ENCODE measurements at regions of chr19 and their contacts with region 1.

Region 1: DNA sequence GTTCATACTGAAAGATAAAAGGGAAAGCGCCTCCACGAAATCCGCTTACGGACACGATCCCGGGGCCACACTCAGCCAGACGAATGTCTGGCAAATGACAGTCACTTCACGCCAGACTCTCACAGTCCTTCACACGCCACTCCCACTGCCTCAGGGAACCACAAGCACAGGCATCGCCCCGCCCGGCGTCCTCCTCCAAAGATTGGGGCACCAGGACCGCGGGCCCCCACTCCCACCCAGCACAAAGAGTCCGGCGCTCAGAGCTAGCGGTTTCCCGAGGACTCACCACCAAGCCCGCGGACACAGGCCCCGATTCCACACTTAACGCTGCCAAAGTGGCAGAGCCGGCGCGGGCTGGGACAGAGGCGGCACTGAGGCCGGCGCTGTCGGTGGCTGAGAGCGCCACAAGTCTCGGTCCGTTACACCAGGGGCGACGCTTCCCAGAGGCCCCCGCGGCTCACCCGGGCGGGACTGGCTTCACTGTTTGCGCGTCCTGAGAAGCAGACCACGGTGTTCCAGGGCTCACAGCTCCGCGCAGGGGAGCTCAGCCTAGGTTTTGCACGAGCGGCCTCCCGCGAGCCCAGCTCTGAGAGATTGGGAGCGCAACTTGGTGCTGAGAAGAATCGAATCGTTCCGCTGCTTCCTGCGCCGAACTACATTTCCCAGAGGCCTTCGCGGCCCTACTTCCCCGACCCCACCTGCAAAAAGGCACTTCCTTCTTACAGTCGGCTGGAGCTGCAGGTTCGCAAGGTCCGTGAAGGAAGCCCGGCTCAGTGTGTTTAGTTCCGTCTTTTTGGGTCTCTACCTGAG is at the start of gene ZNF569:
- DNase-seq: peak; percentile 90 to 96
- H3K4me3 ChIP-seq: peak within 1 kb of the TSS; percentile 73 to 82
- H3K27ac ChIP-seq: peak within 1 kb of the TSS; percentile 83
- H3K4me1 ChIP-seq: peaks cover 31% of the 10 kb centered on the region
- H3K27me3 ChIP-seq: no peaks in the 10 kb centered on the region
- CTCF ChIP-seq: no peak
- POLR2A ChIP-seq: no peak
- total RNA-seq, gene ZNF569: 3.7 TPM

Region 2: GRCh38 chr19:37342753-37343152 is 124.2 kb before region 1 on chr19:
- intact Hi-C with region 1: no loop called
- DNase-seq: no peak
- H3K4me3 ChIP-seq: no peak overlapping the region
- H3K27ac ChIP-seq: no peak overlapping the region
- H3K4me1 ChIP-seq: peaks cover 9% of the 10 kb centered on the region
- H3K27me3 ChIP-seq: no peaks in the 10 kb centered on the region
- CTCF ChIP-seq: no peak
- POLR2A ChIP-seq: no peak

Region 3: DNA sequence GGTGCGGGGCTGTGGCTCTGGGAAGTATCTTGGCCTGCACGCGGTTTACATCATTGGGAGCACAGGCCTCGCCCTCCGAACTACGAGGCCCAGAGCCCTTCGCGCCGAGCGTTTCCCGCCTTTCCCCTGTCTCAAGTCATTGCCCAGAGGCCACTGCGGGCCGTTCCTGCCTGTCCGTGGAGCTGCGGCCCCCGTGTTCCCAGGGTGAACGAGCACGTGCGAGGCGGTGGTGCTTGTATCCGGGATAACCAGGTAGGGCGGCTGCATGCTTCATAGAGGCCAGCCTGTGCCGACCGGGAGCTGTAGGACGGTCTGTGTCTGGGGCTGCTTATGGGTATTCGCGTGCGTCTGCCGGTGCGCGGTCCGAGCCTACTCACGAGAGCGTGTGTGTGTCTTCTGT is 63.6 kb before region 1 on chr19:
- intact Hi-C with region 1: no loop called
- DNase-seq: no peak
- H3K4me3 ChIP-seq: no peak overlapping the region
- H3K27ac ChIP-seq: no peak overlapping the region
- H3K4me1 ChIP-seq: no peaks in the 10 kb centered on the region
- H3K27me3 ChIP-seq: no peaks in the 10 kb centered on the region
- CTCF ChIP-seq: no peak
- POLR2A ChIP-seq: no peak

Region 4: GRCh38 chr19:37413243-37414084 is 53.5 kb before region 1 on chr19:
- intact Hi-C with region 1: no loop called
- DNase-seq: no peak
- H3K4me3 ChIP-seq: no peak overlapping the region
- H3K27ac ChIP-seq: no peak overlapping the region
- H3K4me1 ChIP-seq: no peaks in the 10 kb centered on the region
- H3K27me3 ChIP-seq: no peaks in the 10 kb centered on the region
- CTCF ChIP-seq: no peak
- POLR2A ChIP-seq: no peak

Region 5: GRCh38 chr19:37803250-37803854 is 336.3 kb after region 1 on chr19:
- intact Hi-C with region 1: no loop called
- DNase-seq: no peak
- H3K4me3 ChIP-seq: no peak overlapping the region
- H3K27ac ChIP-seq: no peak overlapping the region
- H3K4me1 ChIP-seq: no peaks in the 10 kb centered on the region
- H3K27me3 ChIP-seq: no peaks in the 10 kb centered on the region
- CTCF ChIP-seq: no peak
- POLR2A ChIP-seq: no peak

Region 6: GRCh38 chr19:38229585-38230073 is 762.6 kb after region 1 on chr19:
- intact Hi-C with region 1: loop called (anchors 5 kb)
- DNase-seq: no peak
- H3K4me3 ChIP-seq: no peak overlapping the region
- H3K27ac ChIP-seq: no peak overlapping the region
- H3K4me1 ChIP-seq: peaks cover 17% of the 10 kb centered on the region
- H3K27me3 ChIP-seq: no peaks in the 10 kb centered on the region
- CTCF ChIP-seq: no peak
- POLR2A ChIP-seq: no peak